ENCODE measurements at regions of chr10 and their contacts with region 1.

Region 1: DNA sequence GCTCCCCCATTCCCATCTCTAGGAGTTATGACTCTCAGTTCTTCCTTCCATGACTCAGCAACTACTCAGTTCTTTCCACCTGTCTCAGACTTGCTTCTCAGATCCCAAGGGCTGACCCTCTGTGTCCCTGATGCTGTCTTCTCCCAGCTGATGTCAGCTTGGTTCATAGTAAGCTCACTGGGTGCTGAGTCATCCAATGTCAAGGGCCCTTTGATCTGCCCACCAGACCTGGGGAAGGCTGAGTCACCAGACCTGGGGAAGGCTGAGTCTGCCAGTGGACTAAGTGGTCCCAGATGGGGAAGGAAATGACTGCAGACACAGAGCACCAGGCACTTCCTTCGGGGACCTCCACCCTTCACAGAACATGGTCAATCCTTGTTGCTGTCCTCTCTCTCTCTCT is 76.1 kb upstream of the ZEB1 start:
- DNase-seq: no peak
- H3K4me3 ChIP-seq: no peak overlapping the region
- H3K27ac ChIP-seq: no peak overlapping the region
- H3K4me1 ChIP-seq: no peaks in the 10 kb centered on the region
- H3K27me3 ChIP-seq: no peaks in the 10 kb centered on the region
- CTCF ChIP-seq: no peak
- EP300 ChIP-seq: no peak
- POLR2A ChIP-seq: no peak

Region 2: DNA sequence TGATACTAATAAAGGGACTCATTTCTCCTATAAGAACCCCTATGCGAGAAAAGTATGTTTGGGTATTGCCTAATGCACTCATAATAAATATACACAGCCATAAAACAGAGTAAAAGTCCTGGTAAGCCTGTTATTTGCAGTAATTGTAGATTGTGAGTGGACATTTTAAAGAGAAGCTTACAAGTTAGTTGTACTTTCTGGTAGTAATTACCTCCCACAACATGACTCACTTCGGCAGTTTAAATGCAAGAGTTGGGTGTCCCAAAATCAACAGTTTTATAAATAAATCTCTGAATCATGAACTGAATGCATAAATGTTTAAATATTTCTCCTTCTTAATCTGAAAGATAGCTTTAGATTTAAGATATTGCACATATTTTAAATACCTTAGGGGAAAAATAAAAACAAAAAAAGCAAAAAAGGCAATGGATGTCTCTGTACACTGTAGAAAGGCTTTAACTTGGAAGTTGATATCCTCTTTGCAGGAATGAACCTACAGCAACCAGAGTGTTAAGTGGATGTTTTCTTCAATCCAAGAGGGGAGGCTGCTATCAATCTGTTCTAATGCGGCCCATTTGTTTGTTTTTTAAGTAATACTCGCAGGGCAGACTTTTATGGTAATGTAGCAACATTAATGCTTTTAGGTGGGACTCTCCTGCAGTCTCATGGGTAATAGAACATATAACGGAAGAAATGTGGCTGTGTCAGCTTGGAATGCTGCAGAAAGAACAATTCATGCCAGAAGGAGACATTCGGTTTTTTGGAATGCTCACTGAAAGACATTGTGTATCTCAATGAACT is 18.8 kb after region 1 on chr10:
- intact Hi-C with region 1: loop called in 1 of 4 experiments (anchors 1 kb)
- DNase-seq: no peak
- H3K4me3 ChIP-seq: no peak overlapping the region
- H3K27ac ChIP-seq: no peak overlapping the region
- H3K4me1 ChIP-seq: peaks cover 9% of the 10 kb centered on the region
- H3K27me3 ChIP-seq: no peaks in the 10 kb centered on the region
- CTCF ChIP-seq: no peak
- EP300 ChIP-seq: no peak
- POLR2A ChIP-seq: no peak

Region 3: DNA sequence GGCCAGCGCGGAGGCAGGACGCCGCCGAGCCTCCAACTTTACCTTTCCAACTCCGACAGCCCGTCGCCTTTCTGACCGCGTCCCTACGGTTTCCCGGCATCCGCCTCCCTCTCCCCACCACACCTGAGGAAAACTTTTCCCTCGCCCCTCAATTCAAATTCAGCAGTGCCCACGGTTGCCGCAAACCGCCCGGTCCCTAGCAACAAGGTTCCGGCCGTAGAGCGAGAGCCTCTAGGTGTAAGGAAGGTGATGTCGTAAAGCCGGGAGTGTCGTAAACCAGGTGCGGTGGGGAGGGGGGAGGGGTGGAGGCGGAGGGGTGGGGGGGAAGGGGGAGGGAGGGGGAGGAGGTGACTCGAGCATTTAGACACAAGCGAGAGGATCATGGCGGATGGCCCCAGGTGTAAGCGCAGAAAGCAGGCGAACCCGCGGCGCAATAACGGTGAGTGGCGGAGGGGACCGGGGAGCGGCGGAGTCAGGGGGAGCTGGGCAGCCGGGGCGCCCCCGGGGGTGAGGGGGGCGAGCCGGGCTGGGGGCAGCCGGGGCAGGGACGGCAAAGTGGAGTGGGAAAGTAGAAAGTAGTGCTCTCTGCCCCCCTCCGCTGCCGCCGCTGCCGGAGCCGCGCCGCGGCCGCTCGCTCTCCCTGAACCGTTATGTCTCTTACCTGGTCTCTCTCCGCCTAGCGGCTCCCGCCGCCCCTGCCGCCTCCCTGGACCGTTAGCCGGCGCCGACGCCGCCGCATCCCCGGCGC is 76.1 kb after region 1 on chr10 and contains the start of gene ZEB1:
- intact Hi-C with region 1: no loop called
- DNase-seq: peak; percentile 87 to 95 (median 92)
- H3K4me3 ChIP-seq: peak within 1 kb of the TSS; percentile 95
- H3K27ac ChIP-seq: peak within 1 kb of the TSS; percentile 89 to 94
- H3K4me1 ChIP-seq: no peaks in the 10 kb centered on the region
- H3K27me3 ChIP-seq: no peaks in the 10 kb centered on the region
- CTCF ChIP-seq: peak; percentile 30 to 69 (median 58)
- EP300 ChIP-seq: no peak
- POLR2A ChIP-seq: peak; percentile 40
- total RNA-seq, gene ZEB1: 23.3 to 48.4 (median 40.7) TPM